ENCODE measurements at regions of chr13 and their contacts with region 1.

Region 1: DNA sequence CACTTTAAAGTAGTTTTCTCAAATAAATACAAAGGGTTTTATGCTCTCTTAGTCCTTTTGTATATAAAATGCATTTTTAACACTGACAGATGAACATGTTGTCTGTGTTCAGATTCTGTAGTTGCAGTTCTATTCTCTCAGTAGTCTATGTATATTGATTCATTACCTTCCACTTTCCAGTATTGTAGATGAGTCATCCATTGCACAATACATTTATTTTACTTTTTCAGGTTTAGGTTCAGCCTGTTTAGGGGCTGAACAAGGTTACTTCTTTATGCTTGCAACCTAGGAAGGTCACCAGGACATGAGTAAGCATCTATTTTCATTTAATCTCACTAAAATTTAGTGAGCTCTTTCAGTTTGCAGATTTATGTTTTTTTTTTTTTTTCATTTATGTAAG is 173.6 kb downstream of the NALCN start:
- DNase-seq: no peak
- ATAC-seq: peak; percentile 43; the same call in 1 of the 3 replicates
- H3K4me3 ChIP-seq: no peak overlapping the region
- H3K27ac ChIP-seq: no peak overlapping the region
- H3K4me1 ChIP-seq: peaks cover 5% of the 10 kb centered on the region; the same call in 1 of the 2 replicates
- H3K27me3 ChIP-seq: no peaks in the 10 kb centered on the region
- CTCF ChIP-seq: no peak
- EP300 ChIP-seq: no peak
- POLR2A ChIP-seq: no peak
- RAD21 ChIP-seq: no peak

Region 2: DNA sequence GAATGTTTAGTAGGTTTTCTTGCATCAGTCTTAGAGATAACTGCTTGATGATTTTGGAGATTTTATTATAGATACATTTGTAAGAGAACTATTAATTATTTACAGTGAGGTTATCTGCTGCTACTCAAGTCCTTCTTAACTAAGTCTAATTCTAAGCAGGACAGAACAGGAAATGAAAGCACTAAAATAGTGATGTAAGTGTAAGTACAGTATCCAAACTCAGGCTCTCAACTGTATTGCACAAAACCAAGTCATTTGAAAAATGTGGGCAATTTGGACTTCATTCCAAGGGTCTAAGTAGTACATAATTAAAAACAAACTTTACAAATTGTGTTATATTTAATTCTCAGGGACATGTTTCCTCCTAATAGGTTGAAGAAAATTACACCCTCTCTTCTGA is 626.8 kb after region 1 on chr13:
- CTCF ChIA-PET with region 1: no interaction called
- POLR2A ChIA-PET with region 1: no interaction called
- in situ Hi-C with region 1: no loop called
- intact Hi-C with region 1: loop called (anchors 5 kb)
- DNase-seq: no peak
- ATAC-seq: no peak
- H3K4me3 ChIP-seq: no peak overlapping the region
- H3K27ac ChIP-seq: no peak overlapping the region
- H3K4me1 ChIP-seq: no peaks in the 10 kb centered on the region
- H3K27me3 ChIP-seq: no peaks in the 10 kb centered on the region
- CTCF ChIP-seq: no peak
- EP300 ChIP-seq: no peak
- POLR2A ChIP-seq: no peak
- RAD21 ChIP-seq: no peak